ENCODE measurements at regions of chr10 and their contacts with region 1.

Region 1: DNA sequence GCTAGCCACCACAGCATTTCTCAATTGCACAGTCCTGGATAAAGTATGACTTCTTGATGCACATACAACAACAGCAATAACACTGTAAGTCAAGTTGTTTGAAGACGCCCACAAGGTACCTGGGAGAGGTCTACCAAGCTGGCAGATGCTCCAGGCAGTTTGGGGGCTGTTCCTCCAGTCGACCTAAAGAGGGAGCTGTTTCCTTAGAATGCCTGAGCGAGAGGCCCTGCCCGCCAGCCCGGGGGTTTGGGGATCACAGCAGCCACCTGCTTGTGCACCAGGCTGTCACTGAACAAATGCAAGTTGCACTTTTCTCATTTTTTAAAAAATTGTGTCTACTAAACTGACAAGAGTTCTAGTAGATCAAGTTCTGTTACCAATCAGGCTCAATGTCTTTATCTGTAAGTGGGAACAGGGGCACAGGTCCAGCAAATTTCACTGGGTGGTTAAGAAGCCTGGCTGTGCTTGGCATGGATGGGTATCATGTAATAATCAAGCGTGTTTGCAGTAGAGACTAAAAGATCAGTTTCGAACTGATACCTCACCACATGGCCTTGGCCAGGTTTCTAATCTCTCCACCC is 193.8 kb upstream of the ADO start:
- DNase-seq: no peak
- H3K4me3 ChIP-seq: no peak overlapping the region
- H3K27ac ChIP-seq: no peak overlapping the region
- H3K27me3 ChIP-seq: peaks cover 3% of the 10 kb centered on the region
- CTCF ChIP-seq: peak; percentile 83

Region 2: GRCh38 chr10:62373995-62374861 is 236.5 kb before region 1 on chr10 and contains the start of gene ZNF365:
- CTCF ChIA-PET with region 1: no interaction called
- POLR2A ChIA-PET with region 1: no interaction called
- DNase-seq: no peak
- H3K4me3 ChIP-seq: peak within 1 kb of the TSS; percentile 68
- H3K27ac ChIP-seq: no peak within 1 kb of the TSS
- H3K27me3 ChIP-seq: no peaks in the 10 kb centered on the region
- CTCF ChIP-seq: no peak
- polyA plus RNA-seq, gene ZNF365: 2.8 and 3.9 TPM in 2 replicates

Region 3: DNA sequence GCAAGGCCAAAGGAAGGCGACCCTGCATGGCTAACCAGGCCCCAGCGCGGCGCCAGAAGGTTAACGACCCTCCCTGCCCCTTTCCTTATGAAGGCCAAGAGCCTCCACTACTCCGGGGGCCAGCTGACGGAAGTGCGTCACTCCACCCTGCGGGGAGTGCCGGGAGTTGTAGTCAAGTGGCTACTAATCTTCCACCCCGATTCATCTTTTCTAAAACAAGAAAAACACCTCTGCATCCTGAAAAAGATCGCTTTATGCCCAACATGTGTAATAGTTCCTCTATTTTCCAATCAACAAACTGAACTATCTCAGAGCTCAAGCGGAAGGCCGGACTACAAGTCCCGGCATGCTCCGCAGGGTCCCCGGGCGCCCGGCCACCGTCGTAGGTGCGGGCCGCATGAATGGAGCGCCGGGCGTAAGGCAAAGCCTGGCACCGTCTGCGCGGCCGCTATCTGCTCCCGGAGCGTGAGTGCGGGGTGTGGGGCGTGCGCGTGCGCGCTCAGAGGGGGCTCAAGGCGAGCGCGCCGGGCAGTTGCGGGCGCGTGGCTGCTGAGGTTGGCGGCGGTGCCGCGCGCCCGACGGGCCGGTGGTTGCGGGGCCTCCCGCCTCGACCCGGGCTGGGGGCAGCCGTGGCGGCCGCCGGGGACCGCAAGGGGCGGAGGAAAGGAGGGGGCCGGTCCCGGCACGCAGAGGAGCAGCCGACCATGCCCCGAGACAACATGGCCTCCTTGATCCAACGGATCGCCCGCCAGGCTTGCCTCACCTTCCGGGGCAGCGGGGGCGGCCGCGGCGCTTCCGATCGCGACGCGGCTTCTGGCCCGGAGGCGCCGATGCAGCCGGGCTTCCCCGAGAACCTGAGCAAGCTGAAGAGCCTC is 193.9 kb after region 1 on chr10 and contains the start of gene ADO:
- CTCF ChIA-PET with region 1: interaction called, 10 read pairs
- POLR2A ChIA-PET with region 1: no interaction called
- DNase-seq: peak; percentile 51
- H3K4me3 ChIP-seq: peak within 1 kb of the TSS; percentile 95
- H3K27ac ChIP-seq: peak within 1 kb of the TSS; percentile 93
- H3K27me3 ChIP-seq: no peaks in the 10 kb centered on the region
- CTCF ChIP-seq: no peak
- polyA plus RNA-seq, gene ADO: 13.3 and 17.8 TPM in 2 replicates

Region 4: GRCh38 chr10:62816331-62817120 is 205.8 kb after region 1 on chr10 and contains the start of gene EGR2:
- CTCF ChIA-PET with region 1: interaction called, 102 read pairs
- POLR2A ChIA-PET with region 1: no interaction called
- DNase-seq: peak; percentile 80
- H3K4me3 ChIP-seq: peak within 1 kb of the TSS; percentile 68
- H3K27ac ChIP-seq: peak within 1 kb of the TSS; percentile 39
- H3K27me3 ChIP-seq: peaks cover 48% of the 10 kb centered on the region
- CTCF ChIP-seq: no peak
- polyA plus RNA-seq, gene EGR2: 0.57 and 0.61 TPM in 2 replicates

Region 5: DNA sequence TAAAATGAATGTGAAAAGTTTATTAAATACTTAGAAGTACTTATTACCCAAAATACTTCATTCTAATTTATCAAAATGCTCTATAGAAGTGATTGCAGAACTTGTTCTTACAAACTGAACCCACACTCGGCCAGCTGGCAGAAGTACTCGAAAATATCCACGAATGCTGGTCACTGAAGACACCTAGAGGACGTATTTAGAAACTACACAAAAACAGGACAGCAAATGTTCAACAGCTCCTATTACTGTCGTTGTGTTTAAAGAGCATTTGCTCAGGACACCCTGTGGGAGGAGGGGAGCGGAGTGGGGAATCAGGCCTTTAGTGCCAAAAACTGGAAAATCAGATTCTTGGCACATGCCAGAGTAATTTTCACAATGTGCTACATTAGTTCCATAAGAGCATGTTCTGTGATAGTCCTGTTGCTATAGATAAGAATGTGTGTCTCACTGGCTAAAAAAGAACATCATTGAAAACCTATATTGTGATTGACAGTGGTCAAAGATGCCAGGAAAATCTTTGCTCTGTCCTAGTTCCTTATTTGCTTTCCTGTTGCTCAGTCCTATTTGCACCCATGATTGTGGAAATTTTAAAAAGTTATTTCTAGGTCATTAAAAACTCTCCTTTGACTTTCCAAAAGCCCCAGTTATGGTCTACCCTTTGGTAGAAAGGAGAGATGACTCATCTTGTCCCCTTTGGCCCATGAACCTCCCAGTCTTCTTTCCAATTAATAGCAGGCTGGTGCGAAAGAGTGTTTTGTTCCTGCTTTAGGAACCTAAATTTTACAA is 473.4 kb after region 1 on chr10:
- CTCF ChIA-PET with region 1: interaction called, 19 read pairs
- POLR2A ChIA-PET with region 1: no interaction called
- DNase-seq: peak; percentile 61
- H3K4me3 ChIP-seq: no peak overlapping the region
- H3K27ac ChIP-seq: no peak overlapping the region
- H3K27me3 ChIP-seq: peaks cover 2% of the 10 kb centered on the region
- CTCF ChIP-seq: peak; percentile 70

Measured in AG04450 (cell line).